Left ventricle myocardium inferior (tissue), 1 donor: ENCODE measurements at regions of chr18 and their contacts with region 1.

Region 1: DNA sequence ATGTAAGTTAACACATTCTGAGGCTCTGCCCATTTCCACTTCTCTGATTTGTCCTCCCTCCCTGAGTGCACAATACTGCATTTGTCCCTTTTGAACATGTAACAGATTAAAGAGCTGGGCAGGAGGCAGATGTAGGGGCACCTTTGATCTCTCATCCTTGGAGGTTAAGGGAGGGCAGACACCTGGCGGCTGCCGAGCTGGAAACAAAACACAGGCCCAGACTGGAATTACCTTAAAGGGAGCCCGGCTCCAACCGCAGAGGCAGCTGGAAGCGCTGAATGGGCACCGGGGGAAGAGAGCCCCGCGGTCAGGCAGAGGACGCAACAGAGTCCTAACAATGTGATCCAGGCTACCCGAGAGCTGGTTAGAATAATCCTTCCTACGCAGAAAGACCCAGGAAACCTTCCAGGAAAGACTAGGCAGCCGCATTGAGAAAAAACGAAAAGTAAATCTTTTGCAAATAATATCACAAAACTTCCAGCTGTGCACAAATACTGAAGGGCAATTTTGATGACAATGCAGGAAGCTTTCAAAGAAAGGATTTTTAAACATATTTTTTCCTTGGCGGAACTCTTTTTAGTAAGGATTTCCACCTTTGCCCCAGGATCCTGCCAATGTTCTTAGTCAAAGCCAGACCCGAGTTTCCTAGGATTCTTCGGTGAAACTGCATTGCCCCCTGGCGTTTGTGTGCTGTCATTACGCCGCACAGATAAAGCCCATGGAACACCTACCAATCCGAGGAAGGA is 216.0 kb downstream of the TGIF1 start:
- DNase-seq: peak; percentile 75
- H3K4me3 ChIP-seq: peak overlapping the region; percentile 53
- H3K27ac ChIP-seq: peak overlapping the region; percentile 65
- H3K4me1 ChIP-seq: peaks cover 7% of the 10 kb centered on the region
- H3K27me3 ChIP-seq: no peaks in the 10 kb centered on the region
- CTCF ChIP-seq: peak; percentile 98

Region 2: DNA sequence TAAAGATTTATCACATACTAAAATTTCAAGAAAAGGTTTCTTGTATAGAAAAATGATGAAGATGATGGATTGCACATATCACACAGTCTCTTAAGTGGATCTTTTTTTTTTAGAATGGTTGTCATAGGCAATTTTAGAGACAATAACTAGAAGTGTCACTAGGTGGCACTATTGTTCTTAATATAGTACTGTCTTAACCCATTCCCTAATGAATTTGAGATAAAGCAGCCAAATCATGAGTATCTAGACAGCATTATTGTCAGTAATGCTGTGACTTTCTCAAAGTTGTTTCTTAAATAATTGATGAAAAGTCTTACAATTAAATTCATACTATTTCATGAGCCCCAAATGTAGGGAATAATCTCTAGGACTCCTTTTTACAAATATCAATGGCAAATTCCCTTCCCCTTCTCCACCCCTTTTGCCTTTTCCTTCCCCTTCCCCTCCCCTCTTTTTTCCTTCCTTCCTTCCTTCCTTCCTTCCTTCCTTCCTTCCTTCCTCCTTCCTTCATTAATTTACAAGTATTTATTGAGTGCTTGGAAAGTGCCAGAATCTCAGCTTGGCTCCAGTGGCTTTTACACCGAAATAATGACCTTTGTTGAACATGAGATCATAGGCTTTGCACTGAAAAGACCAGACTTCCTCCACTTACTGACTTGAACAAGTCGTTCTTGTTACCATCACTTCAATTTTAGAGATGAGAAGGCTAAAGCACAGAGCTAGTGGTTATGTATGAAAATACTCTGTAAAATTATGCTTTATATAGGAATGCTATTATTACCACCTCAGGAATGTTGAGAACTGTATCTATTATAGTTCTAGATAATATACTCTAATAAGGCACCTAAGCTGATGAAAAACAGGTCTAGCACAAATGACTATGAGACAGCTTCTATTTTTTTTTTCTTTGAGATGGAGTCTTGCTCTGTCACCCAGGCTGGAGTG is 384.2 kb before region 1 on chr18:
- intact Hi-C with region 1: loop called (anchors 2 kb)
- DNase-seq: no peak
- H3K4me3 ChIP-seq: peak overlapping the region; percentile 51
- H3K27ac ChIP-seq: peak overlapping the region; percentile 47
- H3K4me1 ChIP-seq: peaks cover 26% of the 10 kb centered on the region
- H3K27me3 ChIP-seq: no peaks in the 10 kb centered on the region
- CTCF ChIP-seq: peak; percentile 79

Region 3: DNA sequence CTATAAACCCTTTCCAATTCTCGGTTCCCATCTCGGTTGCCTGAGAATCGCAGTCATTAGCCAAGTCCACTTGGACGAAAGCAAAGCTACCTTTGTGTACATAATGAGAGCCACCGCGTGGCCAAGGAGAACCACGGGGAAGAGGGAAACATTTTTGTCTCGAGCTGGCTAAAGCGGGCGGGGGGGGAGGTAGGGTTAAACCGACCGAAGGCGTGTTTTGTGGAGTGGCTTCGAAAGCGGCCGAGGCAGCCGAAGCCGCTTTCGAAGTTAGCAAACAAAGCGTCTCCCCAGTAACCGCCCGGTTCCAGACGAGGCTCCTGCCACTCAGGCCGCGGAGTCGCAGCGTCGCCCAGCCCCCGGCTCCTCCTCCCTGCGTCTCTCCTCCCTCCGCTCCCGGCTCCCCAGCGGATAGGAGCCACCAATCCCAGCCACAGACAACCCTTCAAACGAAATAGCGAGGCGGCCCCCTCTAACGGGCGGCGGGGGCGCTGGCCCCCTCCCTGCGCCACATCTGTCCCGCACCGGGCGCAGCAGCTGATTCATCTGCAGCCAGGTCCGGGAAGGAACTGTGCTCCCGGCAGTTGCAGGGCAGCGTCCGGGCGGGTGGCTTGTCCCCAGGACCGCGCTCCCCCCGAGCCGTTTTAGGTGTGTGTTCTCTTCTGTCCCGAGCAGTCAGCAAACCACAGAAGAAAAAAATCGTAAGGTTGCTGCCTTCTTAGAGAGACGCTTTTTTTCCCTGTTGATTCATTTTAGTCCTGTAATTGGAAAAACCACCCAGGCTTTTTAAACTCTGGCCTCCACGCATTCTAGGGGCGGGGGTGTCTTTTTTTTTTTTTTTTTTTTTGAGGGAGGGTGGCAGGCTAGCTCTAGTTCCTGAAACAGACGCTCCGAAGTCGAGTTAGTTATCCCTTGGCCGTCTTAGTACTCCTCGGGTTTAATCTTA is 217.8 kb before region 1 on chr18:
- intact Hi-C with region 1: loop called (anchors 10 kb)
- DNase-seq: peak; percentile 95
- H3K4me3 ChIP-seq: peak overlapping the region; percentile 91
- H3K27ac ChIP-seq: peak overlapping the region; percentile 99
- H3K4me1 ChIP-seq: peaks cover 65% of the 10 kb centered on the region
- H3K27me3 ChIP-seq: no peaks in the 10 kb centered on the region
- CTCF ChIP-seq: peak; percentile 9

Region 4: GRCh38 chr18:3593904-3594661 is 71.9 kb before region 1 on chr18:
- intact Hi-C with region 1: loop called (anchors 5 kb)
- DNase-seq: peak; percentile 80
- H3K4me3 ChIP-seq: peak overlapping the region; percentile 64
- H3K27ac ChIP-seq: peak overlapping the region; percentile 99
- H3K4me1 ChIP-seq: peaks cover 54% of the 10 kb centered on the region
- H3K27me3 ChIP-seq: no peaks in the 10 kb centered on the region
- CTCF ChIP-seq: peak; percentile 87